Activated T-helper 1 cell treated with anti-CD3 and anti-CD28 coated beads, Interleukin-12 subunit alpha, Interleukin-12 subunit beta, Interleukin-2, Interleukin-4 antibody, amounts not matched to agents 30 ng/mL and 10 ng/mL and 1 ng/mL, durations not matched to agents 14 hours and 24 hours and 36 hours (primary cell): ENCODE measurements at regions of chr6 and their contacts with region 1.

Region 1: GRCh38 chr6:118283766-118284165 is 264.3 kb upstream of the PLN start:
- DNase-seq: peak; percentile 7
- H3K4me3 Mint-ChIP-seq: no peak overlapping the region
- H3K27ac Mint-ChIP-seq: no peak overlapping the region
- H3K4me1 Mint-ChIP-seq: no peaks in the 10 kb centered on the region
- H3K27me3 Mint-ChIP-seq: peaks cover 18% of the 10 kb centered on the region

Region 2: GRCh38 chr6:117573006-117573680 is 710.6 kb before region 1 on chr6:
- intact Hi-C with region 1: no loop called
- DNase-seq: no peak
- H3K4me3 Mint-ChIP-seq: no peak overlapping the region
- H3K27ac Mint-ChIP-seq: no peak overlapping the region
- H3K4me1 Mint-ChIP-seq: peaks cover 4% of the 10 kb centered on the region
- H3K27me3 Mint-ChIP-seq: no peaks in the 10 kb centered on the region

Region 3: GRCh38 chr6:118152524-118152923 is 131.2 kb before region 1 on chr6:
- intact Hi-C with region 1: no loop called
- DNase-seq: no peak
- H3K4me3 Mint-ChIP-seq: no peak overlapping the region
- H3K27ac Mint-ChIP-seq: no peak overlapping the region
- H3K4me1 Mint-ChIP-seq: no peaks in the 10 kb centered on the region
- H3K27me3 Mint-ChIP-seq: peaks cover 6% of the 10 kb centered on the region

Region 4: GRCh38 chr6:118580585-118581419 is 297.0 kb after region 1 on chr6:
- intact Hi-C with region 1: loop called (anchors 1 kb)
- DNase-seq: no peak
- H3K4me3 Mint-ChIP-seq: no peak overlapping the region
- H3K27ac Mint-ChIP-seq: no peak overlapping the region
- H3K4me1 Mint-ChIP-seq: no peaks in the 10 kb centered on the region
- H3K27me3 Mint-ChIP-seq: no peaks in the 10 kb centered on the region

Region 5: GRCh38 chr6:118660218-118660569 is 376.4 kb after region 1 on chr6:
- intact Hi-C with region 1: no loop called
- DNase-seq: no peak
- H3K4me3 Mint-ChIP-seq: peak overlapping the region; percentile 3
- H3K27ac Mint-ChIP-seq: peak overlapping the region; percentile 47
- H3K4me1 Mint-ChIP-seq: peaks cover 60% of the 10 kb centered on the region
- H3K27me3 Mint-ChIP-seq: no peaks in the 10 kb centered on the region

Region 6: GRCh38 chr6:118776607-118777549 is 493.1 kb after region 1 on chr6:
- intact Hi-C with region 1: loop called (anchors 2 kb)
- DNase-seq: peak; percentile 55
- H3K4me3 Mint-ChIP-seq: no peak overlapping the region
- H3K27ac Mint-ChIP-seq: no peak overlapping the region
- H3K4me1 Mint-ChIP-seq: peaks cover 14% of the 10 kb centered on the region
- H3K27me3 Mint-ChIP-seq: peaks cover 8% of the 10 kb centered on the region

Region 7: DNA sequence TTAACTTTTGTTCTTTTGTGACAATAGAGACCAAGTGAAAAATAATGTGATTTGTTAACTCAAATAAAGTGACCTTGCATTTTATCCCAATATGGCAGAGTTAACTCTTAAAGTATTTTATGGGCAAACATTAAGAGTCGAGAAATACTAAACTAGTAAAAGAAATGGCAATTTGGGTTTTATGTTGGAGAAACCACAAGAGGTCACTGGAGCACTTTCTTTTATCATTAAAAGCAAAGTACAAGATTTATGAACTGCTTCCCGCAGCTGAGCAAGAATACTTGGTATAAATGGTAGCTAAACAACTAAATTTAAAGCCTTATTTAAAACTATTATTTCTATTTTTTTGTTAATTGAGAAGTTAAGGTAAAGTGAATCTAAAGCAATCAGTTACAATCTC is 684.6 kb after region 1 on chr6:
- intact Hi-C with region 1: loop called (anchors 10 kb)
- DNase-seq: no peak
- H3K4me3 Mint-ChIP-seq: no peak overlapping the region
- H3K27ac Mint-ChIP-seq: no peak overlapping the region
- H3K4me1 Mint-ChIP-seq: peaks cover 4% of the 10 kb centered on the region
- H3K27me3 Mint-ChIP-seq: no peaks in the 10 kb centered on the region